ENCODE measurements at regions of chr6 and their contacts with region 1.

Region 1: GRCh38 chr6:7568021-7568420 is 22.0 kb upstream of the SNRNP48 start:
- DNase-seq: no peak
- H3K4me3 Mint-ChIP-seq: no peak overlapping the region
- H3K27ac Mint-ChIP-seq: no peak overlapping the region
- H3K4me1 Mint-ChIP-seq: no peaks in the 10 kb centered on the region
- H3K27me3 Mint-ChIP-seq: no peaks in the 10 kb centered on the region
- CTCF ChIP-seq: no peak

Region 2: GRCh38 chr6:7424967-7425807 is 142.8 kb before region 1 on chr6:
- CTCF ChIA-PET with region 1: interaction called, 5 read pairs
- POLR2A ChIA-PET with region 1: interaction called, 10 read pairs
- intact Hi-C with region 1: no loop called
- DNase-seq: peak; percentile 80
- H3K4me3 Mint-ChIP-seq: no peak overlapping the region
- H3K27ac Mint-ChIP-seq: no peak overlapping the region
- H3K4me1 Mint-ChIP-seq: no peaks in the 10 kb centered on the region
- H3K27me3 Mint-ChIP-seq: no peaks in the 10 kb centered on the region
- CTCF ChIP-seq: peak; percentile 61

Region 3: GRCh38 chr6:7468382-7469081 is 99.5 kb before region 1 on chr6:
- CTCF ChIA-PET with region 1: interaction called, 4 read pairs
- POLR2A ChIA-PET with region 1: interaction called, 10 read pairs
- intact Hi-C with region 1: no loop called
- DNase-seq: peak; percentile 77
- H3K4me3 Mint-ChIP-seq: peak overlapping the region; percentile 72
- H3K27ac Mint-ChIP-seq: peak overlapping the region; percentile 83
- H3K4me1 Mint-ChIP-seq: peaks cover 30% of the 10 kb centered on the region
- H3K27me3 Mint-ChIP-seq: no peaks in the 10 kb centered on the region
- CTCF ChIP-seq: no peak

Region 4: GRCh38 chr6:7550433-7550801 is 17.6 kb before region 1 on chr6:
- CTCF ChIA-PET with region 1: no interaction called
- POLR2A ChIA-PET with region 1: interaction called, 165 read pairs
- intact Hi-C with region 1: no loop called
- DNase-seq: peak; percentile 63
- H3K4me3 Mint-ChIP-seq: peak overlapping the region; percentile 31
- H3K27ac Mint-ChIP-seq: peak overlapping the region; percentile 57
- H3K4me1 Mint-ChIP-seq: peaks cover 62% of the 10 kb centered on the region
- H3K27me3 Mint-ChIP-seq: no peaks in the 10 kb centered on the region
- CTCF ChIP-seq: no peak

Region 5: GRCh38 chr6:7580927-7581618 is 13.1 kb after region 1 on chr6:
- CTCF ChIA-PET with region 1: interaction called, 3 read pairs
- POLR2A ChIA-PET with region 1: interaction called, 12 read pairs
- intact Hi-C with region 1: no loop called
- DNase-seq: no peak
- H3K4me3 Mint-ChIP-seq: no peak overlapping the region
- H3K27ac Mint-ChIP-seq: no peak overlapping the region
- H3K4me1 Mint-ChIP-seq: no peaks in the 10 kb centered on the region
- H3K27me3 Mint-ChIP-seq: no peaks in the 10 kb centered on the region
- CTCF ChIP-seq: no peak